Mammary epithelial cell (primary cell): ENCODE measurements at regions of chr4 and their contacts with region 1.

Region 1: GRCh38 chr4:74632634-74633033 is 161.7 kb downstream of the BTC start:
- DNase-seq: peak; percentile 99
- H3K4me3 ChIP-seq: no peak overlapping the region
- H3K27ac ChIP-seq: peak overlapping the region; percentile 71
- H3K4me1 ChIP-seq: peaks cover 55% of the 10 kb centered on the region
- H3K27me3 ChIP-seq: no peaks in the 10 kb centered on the region
- CTCF ChIP-seq: no peak

Region 2: DNA sequence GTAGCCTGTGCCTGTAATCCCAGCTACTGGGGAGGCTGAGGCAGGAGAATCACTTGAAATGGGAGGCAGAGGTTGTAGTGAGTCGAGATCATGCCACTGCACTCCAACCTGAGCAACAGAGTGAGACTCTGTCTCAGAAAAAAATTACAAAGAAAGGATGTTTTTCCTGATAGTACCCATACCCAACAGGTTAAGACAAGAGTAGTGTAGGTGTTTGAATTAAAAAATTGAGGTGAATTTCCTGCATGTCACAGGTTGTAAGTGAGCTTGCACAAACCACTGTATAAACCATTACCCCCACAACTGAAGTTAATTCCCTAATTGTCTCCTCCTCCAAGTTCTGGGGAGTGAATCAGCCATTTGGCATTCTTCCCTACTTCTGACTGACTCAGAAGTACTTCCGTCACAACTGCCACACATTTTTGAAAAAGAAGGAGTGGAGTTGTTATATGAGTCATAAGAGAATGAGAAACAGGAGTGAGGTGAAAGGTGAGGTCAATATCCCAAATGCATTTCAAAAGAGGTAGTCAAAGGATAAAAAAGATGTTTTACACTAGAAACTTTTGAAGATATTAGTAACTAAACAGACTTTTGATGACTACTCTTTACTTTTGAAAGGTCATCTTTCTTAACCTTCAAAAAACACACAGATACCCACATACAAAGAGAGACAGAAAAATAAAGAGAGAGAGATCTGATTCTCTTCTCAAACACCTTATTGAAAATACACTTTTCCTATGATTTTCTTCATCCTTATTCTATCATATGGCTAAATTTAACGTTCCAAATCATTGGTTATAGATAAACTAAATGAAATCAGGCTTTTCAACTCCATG is 27.2 kb after region 1 on chr4:
- CTCF ChIA-PET with region 1: interaction called, 3 read pairs
- dilution Hi-C with region 1: no loop called
- in situ Hi-C with region 1: no loop called
- intact Hi-C with region 1: loop called (anchors 2 kb)
- DNase-seq: peak; percentile 100
- H3K4me3 ChIP-seq: no peak overlapping the region
- H3K27ac ChIP-seq: peak overlapping the region; percentile 88
- H3K4me1 ChIP-seq: peaks cover 36% of the 10 kb centered on the region
- H3K27me3 ChIP-seq: no peaks in the 10 kb centered on the region
- CTCF ChIP-seq: no peak